ENCODE measurements at regions of chr2 and their contacts with region 1.

Region 1: DNA sequence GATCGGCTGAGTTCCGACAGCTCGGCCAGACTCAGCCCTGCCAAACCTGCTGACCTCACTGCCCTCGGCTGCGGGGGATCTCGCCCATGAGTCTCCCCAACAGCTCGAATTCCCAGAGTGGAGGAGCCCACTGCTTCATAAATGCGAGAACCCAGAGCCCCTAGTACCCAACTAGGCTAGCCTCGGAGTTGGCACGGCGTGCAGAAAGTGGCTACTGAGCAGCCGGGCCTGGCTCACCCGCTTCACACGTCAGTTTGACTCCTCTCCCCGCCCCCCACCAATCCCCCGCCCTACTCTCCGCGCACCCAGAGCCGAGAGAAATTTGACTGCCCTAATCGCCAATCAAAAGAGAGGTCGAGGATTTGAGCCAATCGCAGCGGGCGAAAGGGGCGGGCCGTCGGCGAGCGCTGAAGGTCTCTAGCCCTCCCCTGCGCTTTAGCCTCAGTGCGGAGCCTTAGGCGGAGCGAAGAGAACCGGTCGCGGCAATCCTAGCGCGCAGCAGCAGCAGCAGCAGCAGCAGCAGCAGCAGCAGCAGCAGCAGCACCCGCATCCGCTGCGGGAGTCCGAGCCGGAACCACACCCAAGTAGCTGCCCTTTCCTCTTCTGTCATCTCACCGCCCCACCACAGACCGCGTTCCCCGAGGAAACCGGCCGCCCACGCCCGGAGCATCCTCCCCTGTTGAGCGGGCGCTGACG is at the start of gene GLS:
- DNase-seq: peak; percentile 95 to 97
- ATAC-seq: peak; percentile 75 to 89 (median 82)
- H3K4me3 ChIP-seq: peak within 1 kb of the TSS; percentile 81
- H3K4me3 Mint-ChIP-seq: peak within 1 kb of the TSS; percentile 98
- H3K27ac ChIP-seq: peak within 1 kb of the TSS; percentile 95
- H3K27ac Mint-ChIP-seq: peak within 1 kb of the TSS; percentile 99 to 100
- H3K4me1 ChIP-seq: peaks cover 22% of the 10 kb centered on the region
- H3K4me1 Mint-ChIP-seq: peaks cover 46 to 47% of the 10 kb centered on the region in 2 donors
- H3K27me3 ChIP-seq: no peaks in the 10 kb centered on the region
- H3K27me3 Mint-ChIP-seq: peaks cover 0 to 2% of the 10 kb centered on the region in 2 donors
- CTCF ChIP-seq: no peak
- total RNA-seq, gene GLS: 279 to 322 (median 285) TPM

Region 2: DNA sequence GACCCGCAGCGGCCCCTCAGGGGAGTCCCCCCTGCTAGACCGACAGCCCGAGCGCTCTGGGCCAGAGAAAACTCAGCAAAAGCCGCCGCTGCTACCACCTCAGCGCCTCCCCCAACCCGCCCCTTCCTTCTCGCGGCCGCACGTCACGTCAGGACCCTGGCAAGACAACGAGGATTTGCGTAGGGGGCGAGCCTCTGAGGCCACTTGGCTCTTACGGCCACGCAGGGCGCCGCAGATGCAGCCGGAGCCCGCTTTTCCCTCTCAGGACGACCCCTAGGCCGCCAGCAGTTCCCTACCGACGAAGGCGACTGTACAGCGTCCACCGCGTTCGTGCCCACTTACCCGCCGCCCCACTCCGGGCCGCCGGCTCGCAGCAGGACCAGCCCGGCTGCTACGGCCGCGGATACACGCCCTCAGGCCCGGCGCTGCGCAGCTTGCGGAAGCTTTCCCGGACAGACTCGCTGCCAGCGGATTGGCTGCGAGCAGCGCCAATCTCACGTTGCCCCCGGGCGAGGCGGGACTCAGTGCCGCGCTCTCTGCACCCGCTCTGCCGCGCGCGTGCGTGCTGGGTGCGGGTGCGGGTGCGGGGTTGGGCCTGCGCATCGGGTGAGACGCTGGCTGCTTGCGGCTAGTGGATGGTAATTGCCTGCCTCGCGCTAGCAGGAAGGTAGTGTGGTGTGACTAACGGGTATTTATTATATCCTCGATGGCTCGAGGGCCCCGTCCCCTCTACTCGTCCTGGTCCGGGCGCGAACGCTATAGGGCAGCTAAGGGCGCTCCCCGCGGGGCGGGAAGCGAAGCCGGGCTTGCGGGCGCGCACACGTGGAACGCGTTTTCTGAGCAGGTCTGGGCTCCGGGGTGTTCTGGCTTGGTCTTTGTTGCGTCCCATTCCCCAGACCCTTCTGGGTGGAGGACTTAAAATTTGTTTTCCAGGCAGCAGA is 1096.3 kb before region 1 on chr2 and contains the starts of genes ORMDL1 and PMS1:
- intact Hi-C with region 1: loop called (anchors 5 kb)
- DNase-seq: peak; percentile 97
- ATAC-seq: peak; percentile 85 to 97 (median 87)
- H3K4me3 ChIP-seq: peak within 1 kb of the TSS; percentile 92
- H3K4me3 Mint-ChIP-seq: peak within 1 kb of the TSS; percentile 92
- H3K27ac ChIP-seq: peak within 1 kb of the TSS; percentile 98
- H3K27ac Mint-ChIP-seq: peak within 1 kb of the TSS; percentile 96 to 97
- H3K4me1 ChIP-seq: peaks cover 10% of the 10 kb centered on the region
- H3K4me1 Mint-ChIP-seq: peaks cover 42 to 58% of the 10 kb centered on the region in 2 donors
- H3K27me3 ChIP-seq: no peaks in the 10 kb centered on the region
- H3K27me3 Mint-ChIP-seq: no peaks in the 10 kb centered on the region
- CTCF ChIP-seq: no peak
- total RNA-seq, gene ORMDL1: 83.1 to 103 (median 101) TPM
- total RNA-seq, gene PMS1: 28.9 to 32.3 (median 29.1) TPM

Region 3: GRCh38 chr2:190408538-190409271 is 471.8 kb before region 1 on chr2:
- intact Hi-C with region 1: no loop called
- DNase-seq: peak; percentile 59 to 91
- ATAC-seq: peak; percentile 69 to 85 (median 79)
- H3K4me3 ChIP-seq: peak overlapping the region; percentile 92
- H3K4me3 Mint-ChIP-seq: peak overlapping the region; percentile 90
- H3K27ac ChIP-seq: peak overlapping the region; percentile 97
- H3K27ac Mint-ChIP-seq: peak overlapping the region in 1 of 2 donors; percentile 83
- H3K4me1 ChIP-seq: peaks cover 19% of the 10 kb centered on the region
- H3K4me1 Mint-ChIP-seq: peaks cover 25 to 31% of the 10 kb centered on the region in 2 donors
- H3K27me3 ChIP-seq: no peaks in the 10 kb centered on the region
- H3K27me3 Mint-ChIP-seq: no peaks in the 10 kb centered on the region
- CTCF ChIP-seq: no peak

Region 4: DNA sequence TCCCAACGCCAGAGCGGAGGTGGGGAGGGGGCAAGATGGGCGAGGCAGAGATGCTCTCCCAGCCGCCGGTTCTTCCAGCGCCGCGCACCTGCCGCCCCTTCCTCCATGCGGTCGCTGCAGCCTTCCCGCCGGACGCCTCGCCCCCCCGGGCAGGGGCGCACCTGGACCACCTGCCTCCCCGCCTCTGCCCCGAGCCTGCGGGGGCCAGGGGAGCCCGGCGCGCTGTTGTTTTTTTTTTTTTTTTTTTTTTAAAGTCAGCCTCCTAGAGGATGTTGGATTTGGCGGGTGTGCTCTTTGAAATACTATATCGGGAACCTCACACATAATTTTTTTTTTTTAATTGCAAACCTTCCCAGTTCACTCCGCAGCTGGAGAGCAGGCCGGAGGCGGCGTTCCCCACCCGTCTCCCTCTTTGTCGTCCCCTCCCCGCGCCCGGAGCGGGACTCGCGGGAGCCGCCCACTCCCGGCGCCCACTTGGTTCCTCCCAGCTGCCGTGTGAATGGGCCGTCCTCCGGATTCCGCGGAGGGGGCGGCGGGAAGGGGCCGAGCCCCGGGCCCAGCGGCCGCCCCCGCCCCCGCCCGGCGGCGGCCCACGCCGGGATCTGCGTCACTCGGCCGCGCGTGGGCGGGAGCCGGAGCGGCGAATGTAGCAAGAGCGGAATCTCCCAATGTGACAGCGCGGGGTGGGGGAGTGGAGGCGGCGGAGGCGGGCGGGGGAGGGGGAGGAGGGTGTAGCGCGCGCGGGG is 232.1 kb before region 1 on chr2:
- intact Hi-C with region 1: loop called (anchors 2 kb)
- DNase-seq: peak; percentile 90 to 97
- ATAC-seq: peak; percentile 77 to 93 (median 83)
- H3K4me3 ChIP-seq: peak overlapping the region; percentile 91
- H3K4me3 Mint-ChIP-seq: peak overlapping the region; percentile 95
- H3K27ac ChIP-seq: peak overlapping the region; percentile 82
- H3K27ac Mint-ChIP-seq: peak overlapping the region; percentile 86 to 90
- H3K4me1 ChIP-seq: peaks cover 14% of the 10 kb centered on the region
- H3K4me1 Mint-ChIP-seq: peaks cover 19 to 27% of the 10 kb centered on the region in 2 donors
- H3K27me3 ChIP-seq: no peaks in the 10 kb centered on the region
- H3K27me3 Mint-ChIP-seq: no peaks in the 10 kb centered on the region
- CTCF ChIP-seq: no peak

Region 5: DNA sequence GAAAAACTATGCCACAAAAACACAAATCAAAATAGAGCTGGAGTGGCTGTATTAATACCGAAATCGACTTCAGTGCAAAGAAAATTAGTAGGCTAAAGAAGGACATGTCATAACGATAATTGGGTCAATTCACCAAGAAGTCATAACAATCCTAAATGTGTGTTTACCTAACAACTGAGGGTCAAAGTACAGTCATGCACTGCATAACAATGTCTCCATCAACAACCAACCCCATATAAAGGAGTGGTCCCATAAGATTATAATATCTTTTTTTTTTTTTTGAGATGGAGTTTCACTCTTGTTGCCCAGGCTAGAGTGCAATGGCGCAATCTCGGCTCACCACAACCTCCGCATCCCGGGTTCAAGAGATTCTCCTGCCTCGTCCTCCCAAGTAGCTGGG is 144.2 kb before region 1 on chr2:
- intact Hi-C with region 1: no loop called
- DNase-seq: no peak
- ATAC-seq: no peak
- H3K4me3 ChIP-seq: no peak overlapping the region
- H3K4me3 Mint-ChIP-seq: no peak overlapping the region
- H3K27ac ChIP-seq: no peak overlapping the region
- H3K27ac Mint-ChIP-seq: no peak overlapping the region
- H3K4me1 ChIP-seq: no peaks in the 10 kb centered on the region
- H3K4me1 Mint-ChIP-seq: no peaks in the 10 kb centered on the region
- H3K27me3 ChIP-seq: no peaks in the 10 kb centered on the region
- H3K27me3 Mint-ChIP-seq: peaks cover 9 to 32% of the 10 kb centered on the region in 2 donors
- CTCF ChIP-seq: no peak

Region 6: GRCh38 chr2:191013932-191014652 is 133.6 kb after region 1 on chr2 and contains the start of gene STAT1:
- intact Hi-C with region 1: loop called (anchors 2 kb)
- DNase-seq: peak; percentile 97 to 99
- ATAC-seq: peak; percentile 86 to 97 (median 91)
- H3K4me3 ChIP-seq: peak within 1 kb of the TSS; percentile 73
- H3K4me3 Mint-ChIP-seq: no peak within 1 kb of the TSS
- H3K27ac ChIP-seq: peak within 1 kb of the TSS; percentile 97
- H3K27ac Mint-ChIP-seq: no peak within 1 kb of the TSS
- H3K4me1 ChIP-seq: peaks cover 39% of the 10 kb centered on the region
- H3K4me1 Mint-ChIP-seq: peaks cover 5 to 11% of the 10 kb centered on the region in 2 donors
- H3K27me3 ChIP-seq: no peaks in the 10 kb centered on the region
- H3K27me3 Mint-ChIP-seq: no peaks in the 10 kb centered on the region
- CTCF ChIP-seq: no peak
- total RNA-seq, gene STAT1: 49.1 to 91.6 (median 86.2) TPM

Region 7: GRCh38 chr2:191150600-191151330 is 270.2 kb after region 1 on chr2 and contains the start of gene STAT4:
- intact Hi-C with region 1: loop called (anchors 2 kb)
- DNase-seq: peak; percentile 79 to 96
- ATAC-seq: peak; percentile 71 to 90 (median 82)
- H3K4me3 ChIP-seq: peak within 1 kb of the TSS; percentile 63
- H3K4me3 Mint-ChIP-seq: peak within 1 kb of the TSS; percentile 87
- H3K27ac ChIP-seq: peak within 1 kb of the TSS; percentile 92
- H3K27ac Mint-ChIP-seq: peak within 1 kb of the TSS; percentile 95 to 98
- H3K4me1 ChIP-seq: peaks cover 36% of the 10 kb centered on the region
- H3K4me1 Mint-ChIP-seq: peaks cover 79 to 85% of the 10 kb centered on the region in 2 donors
- H3K27me3 ChIP-seq: no peaks in the 10 kb centered on the region
- H3K27me3 Mint-ChIP-seq: no peaks in the 10 kb centered on the region
- CTCF ChIP-seq: no peak
- total RNA-seq, gene STAT4: 264 to 339 (median 304) TPM